Left colon (tissue), 2 donors: ENCODE measurements at regions of chr1 and their contacts with region 1.

Region 1: GRCh38 chr1:176029609-176030008 is 177.5 kb downstream of the COP1 start:
- DNase-seq: no peak
- ATAC-seq: no peak

Region 2: DNA sequence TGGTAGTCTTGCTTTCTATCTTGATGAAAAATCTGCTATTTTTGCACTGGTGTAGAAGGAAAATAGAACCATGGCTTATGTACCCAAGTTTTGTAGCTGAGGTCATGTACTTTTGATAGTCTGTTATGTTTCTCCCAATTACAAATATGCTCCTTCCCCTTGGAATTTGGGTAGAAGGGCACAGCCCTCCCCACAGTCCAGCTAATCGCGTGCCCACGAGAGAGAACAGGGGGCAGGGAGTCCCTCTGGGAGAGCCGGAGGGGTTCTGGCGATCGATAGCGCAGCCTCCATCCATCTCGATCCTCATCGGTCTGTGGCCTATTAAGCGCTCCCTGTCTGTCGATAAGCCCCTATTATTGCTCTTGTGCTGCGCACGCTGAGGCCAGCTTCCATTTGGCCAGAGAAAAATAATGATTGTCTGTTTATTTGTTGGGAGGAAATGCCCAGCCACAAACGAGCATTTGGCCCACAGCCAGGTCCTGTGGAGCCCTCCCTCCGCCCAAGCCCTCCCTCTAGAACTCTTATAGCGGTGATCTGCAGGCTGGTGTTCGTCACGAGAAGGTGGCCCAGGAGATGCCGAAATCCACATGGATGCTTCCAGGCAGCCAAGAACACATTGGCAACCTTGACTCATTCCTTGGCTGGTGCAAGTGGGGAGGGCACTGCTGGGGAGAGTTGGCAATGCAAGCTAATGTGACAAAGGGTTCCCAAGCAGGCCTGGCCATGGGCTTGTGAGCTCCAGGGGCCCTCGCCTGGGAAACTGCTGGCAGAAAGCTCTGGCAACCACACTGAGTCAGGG is 151.5 kb before region 1 on chr1:
- intact Hi-C with region 1: no loop called
- DNase-seq: no peak
- ATAC-seq: no peak

Region 3: GRCh38 chr1:176066709-176067108 is 37.1 kb after region 1 on chr1:
- intact Hi-C with region 1: loop called in 1 of 2 experiments (anchors 2 kb)
- DNase-seq: no peak
- ATAC-seq: no peak

Region 4: DNA sequence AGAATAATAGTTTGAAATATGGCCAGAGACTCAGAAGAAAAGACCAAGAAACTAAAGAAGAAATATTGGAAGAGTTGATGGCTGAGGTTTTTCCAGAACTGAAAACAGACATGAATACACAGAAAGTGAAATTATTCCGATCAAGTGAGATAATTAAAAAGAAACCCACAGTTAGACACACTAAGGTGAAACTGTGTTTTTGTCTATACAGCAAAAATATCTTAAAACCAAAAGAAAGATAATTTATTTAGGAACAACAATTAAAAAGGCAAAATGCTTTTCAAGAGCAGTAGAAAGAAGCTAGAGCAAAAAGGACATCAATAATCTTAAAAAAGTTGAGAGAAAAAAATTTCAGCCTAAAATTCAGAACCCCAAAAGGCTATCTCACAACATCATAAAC is 61.2 kb after region 1 on chr1:
- intact Hi-C with region 1: no loop called
- DNase-seq: no peak
- ATAC-seq: no peak